ENCODE measurements at regions of chr7 and their contacts with region 1.

Region 1: GRCh38 chr7:77442636-77443035 is 26.5 kb upstream of the GSAP start:
- DNase-seq: no peak
- ATAC-seq: no peak
- H3K4me3 Mint-ChIP-seq: no peak overlapping the region
- H3K27ac Mint-ChIP-seq: no peak overlapping the region
- H3K4me1 Mint-ChIP-seq: no peaks in the 10 kb centered on the region
- H3K27me3 Mint-ChIP-seq: no peaks in the 10 kb centered on the region
- CTCF ChIP-seq: no peak

Region 2: DNA sequence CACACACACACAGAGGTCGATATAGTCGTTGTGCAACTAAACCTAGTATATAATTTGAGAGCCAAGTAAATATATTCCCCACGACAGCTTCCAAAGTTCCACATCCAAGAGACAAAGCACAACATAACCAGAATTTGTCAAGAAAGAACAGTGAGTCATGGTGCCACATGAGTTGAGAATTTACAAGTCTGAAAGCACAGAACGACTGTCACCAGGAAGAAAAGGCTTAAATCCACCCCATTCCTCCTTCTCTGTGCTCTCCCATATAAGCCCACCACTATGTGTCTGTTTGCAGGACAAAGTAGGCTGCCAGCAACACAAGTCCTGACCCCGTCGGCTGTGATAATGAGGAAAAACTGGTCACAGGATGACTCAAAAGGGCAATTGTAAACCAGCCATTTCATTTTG is 59.3 kb before region 1 on chr7:
- CTCF ChIA-PET with region 1: no interaction called
- POLR2A ChIA-PET with region 1: no interaction called
- intact Hi-C with region 1: no loop called
- DNase-seq: no peak
- ATAC-seq: no peak
- H3K4me3 Mint-ChIP-seq: no peak overlapping the region
- H3K27ac Mint-ChIP-seq: no peak overlapping the region
- H3K4me1 Mint-ChIP-seq: peaks cover 15% of the 10 kb centered on the region
- H3K27me3 Mint-ChIP-seq: no peaks in the 10 kb centered on the region
- CTCF ChIP-seq: no peak

Region 3: GRCh38 chr7:77467408-77467807 is 24.8 kb after region 1 on chr7:
- CTCF ChIA-PET with region 1: no interaction called
- POLR2A ChIA-PET with region 1: no interaction called
- intact Hi-C with region 1: loop called (anchors 2 kb)
- DNase-seq: no peak
- ATAC-seq: no peak
- H3K4me3 Mint-ChIP-seq: no peak overlapping the region
- H3K27ac Mint-ChIP-seq: no peak overlapping the region
- H3K4me1 Mint-ChIP-seq: peaks cover 32% of the 10 kb centered on the region
- H3K27me3 Mint-ChIP-seq: no peaks in the 10 kb centered on the region
- CTCF ChIP-seq: no peak

Region 4: GRCh38 chr7:77479536-77480088 is 37.0 kb after region 1 on chr7:
- CTCF ChIA-PET with region 1: no interaction called
- POLR2A ChIA-PET with region 1: no interaction called
- intact Hi-C with region 1: loop called (anchors 5 kb)
- DNase-seq: no peak
- ATAC-seq: no peak
- H3K4me3 Mint-ChIP-seq: no peak overlapping the region
- H3K27ac Mint-ChIP-seq: no peak overlapping the region
- H3K4me1 Mint-ChIP-seq: peaks cover 4% of the 10 kb centered on the region
- H3K27me3 Mint-ChIP-seq: peaks cover 2% of the 10 kb centered on the region
- CTCF ChIP-seq: no peak

Region 5: DNA sequence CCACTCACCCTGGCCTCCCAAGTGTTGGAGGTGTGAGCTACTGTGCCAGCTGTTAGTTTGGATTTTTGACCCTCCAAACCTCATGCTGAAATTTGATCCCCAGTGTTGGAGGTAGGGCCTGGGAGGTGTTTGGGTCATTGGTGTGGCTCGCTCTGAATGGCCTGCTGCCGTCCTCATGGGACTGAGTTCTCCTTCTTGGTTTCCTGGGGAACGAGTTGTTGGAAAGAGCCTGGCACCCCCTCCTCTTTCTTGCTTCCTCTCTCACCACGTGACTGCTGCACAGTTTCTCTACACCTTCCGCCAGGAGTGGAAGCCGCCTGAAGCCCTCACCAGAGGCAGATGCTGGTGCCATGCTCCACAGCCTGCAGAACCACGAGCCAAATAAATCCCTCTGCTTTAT is 609.5 kb after region 1 on chr7:
- CTCF ChIA-PET with region 1: no interaction called
- POLR2A ChIA-PET with region 1: no interaction called
- intact Hi-C with region 1: no loop called
- DNase-seq: no peak
- ATAC-seq: no peak
- H3K4me3 Mint-ChIP-seq: no peak overlapping the region
- H3K27ac Mint-ChIP-seq: no peak overlapping the region
- H3K4me1 Mint-ChIP-seq: no peaks in the 10 kb centered on the region
- H3K27me3 Mint-ChIP-seq: peaks cover 7% of the 10 kb centered on the region
- CTCF ChIP-seq: no peak